ENCODE measurements at regions of chr3 and their contacts with region 1.

Region 1: DNA sequence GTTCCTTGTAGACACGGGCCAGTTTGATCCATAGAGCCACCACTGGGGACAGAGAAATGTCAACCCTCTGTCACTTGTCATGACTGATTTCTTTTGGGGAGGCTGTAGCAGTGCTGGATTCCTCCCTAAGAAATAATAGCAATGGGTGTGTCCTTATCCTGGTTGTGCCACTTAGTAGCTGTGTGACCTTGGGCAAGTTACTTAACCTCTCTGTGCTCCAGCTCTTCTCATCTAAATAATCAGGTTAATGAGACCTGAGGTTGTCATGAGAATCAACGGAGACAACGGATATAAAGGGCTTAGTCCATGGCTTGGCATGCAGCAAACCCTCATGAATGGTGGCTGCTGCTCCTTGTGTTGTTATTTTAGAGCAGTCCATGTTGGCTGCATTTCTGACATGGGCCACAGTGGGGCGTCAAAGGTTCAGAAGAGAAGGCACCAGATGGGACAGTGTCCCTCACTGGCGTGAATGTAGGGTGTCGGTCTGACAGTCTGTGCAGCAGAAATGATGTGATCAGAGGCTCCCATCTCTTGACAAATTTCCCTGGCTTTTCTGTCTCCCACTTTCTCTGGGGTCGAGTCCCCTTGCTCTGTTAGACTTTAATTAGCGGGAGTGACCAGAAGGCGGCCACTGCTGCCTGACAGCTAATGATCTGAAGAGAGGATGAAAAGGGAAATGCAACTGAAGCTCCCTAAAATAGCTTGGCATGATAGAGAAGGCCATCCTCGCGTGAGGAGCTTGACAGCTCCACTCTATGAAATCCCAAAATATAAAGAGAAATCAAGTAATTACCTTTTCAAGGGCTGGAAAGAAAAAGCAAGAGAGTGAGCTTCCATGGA is 209.4 kb downstream of the CADPS start:
- DNase-seq: peak; percentile 90
- H3K4me3 ChIP-seq: peak overlapping the region; percentile 21
- H3K27ac ChIP-seq: peak overlapping the region; percentile 47
- H3K4me1 ChIP-seq: peaks cover 50% of the 10 kb centered on the region
- CTCF ChIP-seq: peak; percentile 97

Region 2: DNA sequence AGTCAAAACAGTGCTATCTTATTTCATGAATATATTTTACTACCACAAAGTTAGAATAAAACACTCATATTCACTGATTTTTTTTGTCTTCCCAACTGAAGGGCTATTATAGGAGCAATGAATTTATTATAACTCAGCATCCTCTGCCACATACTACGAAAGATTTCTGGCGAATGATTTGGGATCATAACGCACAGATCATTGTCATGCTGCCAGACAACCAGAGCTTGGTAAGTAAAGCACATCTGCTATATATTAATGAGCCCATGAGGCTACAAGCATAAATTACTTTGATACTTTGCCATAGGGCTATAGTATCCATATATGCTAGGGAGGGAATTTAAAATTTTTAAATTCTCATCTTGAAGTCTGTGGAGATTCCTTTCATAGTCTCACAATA is 388.4 kb before region 1 on chr3:
- CTCF ChIA-PET with region 1: no interaction called
- POLR2A ChIA-PET with region 1: no interaction called
- intact Hi-C with region 1: no loop called
- DNase-seq: no peak
- H3K4me3 ChIP-seq: no peak overlapping the region
- H3K27ac ChIP-seq: no peak overlapping the region
- H3K4me1 ChIP-seq: no peaks in the 10 kb centered on the region
- CTCF ChIP-seq: no peak

Region 3: GRCh38 chr3:62723166-62723913 is 57.5 kb after region 1 on chr3:
- CTCF ChIA-PET with region 1: interaction called, 7 read pairs
- POLR2A ChIA-PET with region 1: interaction called, 12 read pairs
- intact Hi-C with region 1: loop called (anchors 1 kb)
- DNase-seq: peak; percentile 82
- H3K4me3 ChIP-seq: peak overlapping the region; percentile 58
- H3K27ac ChIP-seq: peak overlapping the region; percentile 85
- H3K4me1 ChIP-seq: peaks cover 73% of the 10 kb centered on the region
- CTCF ChIP-seq: no peak

Region 4: DNA sequence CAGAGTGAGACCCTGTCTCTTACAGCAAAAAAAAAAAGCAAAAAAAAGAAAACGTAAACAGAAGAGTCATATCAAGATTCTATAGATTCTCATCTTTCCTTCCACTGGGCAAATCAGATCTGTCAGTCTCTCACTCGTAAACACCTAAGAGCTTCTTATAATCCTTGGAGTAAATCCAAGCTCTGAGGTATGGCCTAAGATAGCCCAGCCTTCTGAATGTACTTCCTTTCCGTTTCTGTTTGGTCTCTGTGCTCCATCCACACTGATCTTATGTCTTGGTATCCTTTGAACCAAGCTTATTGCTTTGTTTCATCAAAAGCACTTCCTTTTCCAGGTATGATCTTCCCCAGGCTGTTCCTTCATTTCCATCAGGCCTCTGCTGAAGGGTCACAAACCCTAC is 71.6 kb after region 1 on chr3:
- CTCF ChIA-PET with region 1: no interaction called
- POLR2A ChIA-PET with region 1: no interaction called
- intact Hi-C with region 1: no loop called
- DNase-seq: no peak
- H3K4me3 ChIP-seq: no peak overlapping the region
- H3K27ac ChIP-seq: no peak overlapping the region
- H3K4me1 ChIP-seq: peaks cover 5% of the 10 kb centered on the region
- CTCF ChIP-seq: no peak

Region 5: GRCh38 chr3:62798000-62798399 is 132.2 kb after region 1 on chr3:
- CTCF ChIA-PET with region 1: interaction called, 17 read pairs
- POLR2A ChIA-PET with region 1: interaction called, 142 read pairs
- intact Hi-C with region 1: loop called (anchors 1 kb)
- DNase-seq: no peak
- H3K4me3 ChIP-seq: no peak overlapping the region
- H3K27ac ChIP-seq: peak overlapping the region; percentile 88
- H3K4me1 ChIP-seq: peaks cover 99% of the 10 kb centered on the region
- CTCF ChIP-seq: no peak

Region 6: GRCh38 chr3:62818347-62818746 is 152.5 kb after region 1 on chr3:
- CTCF ChIA-PET with region 1: interaction called, 4 read pairs
- POLR2A ChIA-PET with region 1: interaction called, 13 read pairs
- intact Hi-C with region 1: loop called (anchors 5 kb)
- DNase-seq: peak; percentile 96
- H3K4me3 ChIP-seq: peak overlapping the region; percentile 49
- H3K27ac ChIP-seq: peak overlapping the region; percentile 99
- H3K4me1 ChIP-seq: peaks cover 98% of the 10 kb centered on the region
- CTCF ChIP-seq: no peak

Region 7: DNA sequence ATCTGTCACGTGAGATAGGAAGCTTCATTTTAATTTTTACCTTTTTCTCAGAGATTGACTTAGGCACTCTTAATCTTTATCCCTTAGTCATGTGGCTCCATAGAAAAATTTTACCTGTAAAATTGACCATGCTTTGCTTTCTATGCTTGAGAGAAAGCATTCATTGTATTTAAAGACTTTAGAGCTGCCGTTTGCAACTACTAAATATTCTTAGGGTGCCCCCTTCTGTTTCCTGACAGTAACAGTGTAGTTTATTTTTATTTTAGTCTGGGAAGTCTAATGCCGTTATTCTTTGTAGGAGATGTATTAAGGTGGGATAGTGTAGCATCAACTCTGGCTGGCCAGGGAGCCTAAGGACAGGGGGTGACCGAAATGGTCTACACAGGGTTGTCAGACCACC is 527.8 kb after region 1 on chr3:
- CTCF ChIA-PET with region 1: no interaction called
- POLR2A ChIA-PET with region 1: interaction called, 8 read pairs
- intact Hi-C with region 1: loop called (anchors 1 kb)
- DNase-seq: peak; percentile 61
- H3K4me3 ChIP-seq: no peak overlapping the region
- H3K27ac ChIP-seq: no peak overlapping the region
- H3K4me1 ChIP-seq: no peaks in the 10 kb centered on the region
- CTCF ChIP-seq: peak; percentile 91